MCF 10A (cell line): ENCODE measurements at regions of chr17 and their contacts with region 1.

Region 1: GRCh38 chr17:7351665-7352501 is at the start of gene KCTD11:
- DNase-seq: peak; percentile 89
- H3K4me3 Mint-ChIP-seq: peak within 1 kb of the TSS; percentile 85
- H3K27ac Mint-ChIP-seq: peak within 1 kb of the TSS; percentile 93
- H3K4me1 Mint-ChIP-seq: peaks cover 17% of the 10 kb centered on the region
- H3K27me3 Mint-ChIP-seq: no peaks in the 10 kb centered on the region
- CTCF ChIP-seq: no peak
- total RNA-seq, gene KCTD11: 9.2 and 10.1 TPM in 2 replicates

Region 2: GRCh38 chr17:7306911-7307686 is 44.8 kb before region 1 on chr17 and contains the start of gene EIF5A:
- CTCF ChIA-PET with region 1: interaction called, 6 read pairs
- POLR2A ChIA-PET with region 1: interaction called, 13 read pairs
- intact Hi-C with region 1: no loop called
- DNase-seq: peak; percentile 100
- H3K4me3 Mint-ChIP-seq: peak within 1 kb of the TSS; percentile 88
- H3K27ac Mint-ChIP-seq: peak within 1 kb of the TSS; percentile 90
- H3K4me1 Mint-ChIP-seq: peaks cover 24% of the 10 kb centered on the region
- H3K27me3 Mint-ChIP-seq: no peaks in the 10 kb centered on the region
- CTCF ChIP-seq: no peak
- total RNA-seq, gene EIF5A: 1,142 and 1,190 TPM in 2 replicates

Region 3: DNA sequence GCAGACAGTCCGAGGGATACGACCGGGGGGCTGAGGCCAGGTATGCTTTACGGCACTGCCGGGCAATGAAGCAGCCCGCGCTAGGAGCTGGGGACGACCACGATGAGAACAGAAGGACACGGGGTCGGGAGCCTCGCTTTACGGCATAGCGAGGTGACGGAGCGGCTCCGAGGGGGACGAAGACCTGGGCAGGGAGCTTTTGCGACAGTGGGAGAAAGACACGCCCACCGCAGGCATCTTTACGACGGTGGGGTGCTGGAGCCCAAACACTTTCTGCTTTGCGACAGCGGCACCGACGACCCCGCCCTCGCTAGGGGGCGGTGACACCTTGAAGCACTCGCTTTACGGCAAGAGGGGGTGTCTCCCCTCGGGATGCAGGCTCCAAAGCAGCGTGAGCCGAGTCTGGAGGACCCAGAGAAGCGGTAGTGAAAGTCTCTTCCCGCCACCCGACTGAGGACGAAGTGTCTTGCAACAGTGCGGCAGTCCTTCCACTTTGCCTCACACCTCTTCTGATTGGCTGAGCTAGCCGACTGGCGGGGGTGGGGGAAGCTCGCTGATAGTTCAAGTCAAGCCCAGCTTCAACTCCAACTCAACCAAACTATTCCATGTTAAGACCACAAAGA is 22.4 kb before region 1 on chr17:
- CTCF ChIA-PET with region 1: interaction called, 3 read pairs
- POLR2A ChIA-PET with region 1: interaction called, 54 read pairs
- intact Hi-C with region 1: no loop called
- DNase-seq: peak; percentile 98
- H3K4me3 Mint-ChIP-seq: peak overlapping the region; percentile 99
- H3K27ac Mint-ChIP-seq: peak overlapping the region; percentile 96
- H3K4me1 Mint-ChIP-seq: peaks cover 15% of the 10 kb centered on the region
- H3K27me3 Mint-ChIP-seq: no peaks in the 10 kb centered on the region
- CTCF ChIP-seq: no peak

Region 4: GRCh38 chr17:7380321-7380720 is 28.4 kb after region 1 on chr17:
- CTCF ChIA-PET with region 1: interaction called, 5 read pairs
- POLR2A ChIA-PET with region 1: interaction called, 13 read pairs
- intact Hi-C with region 1: loop called (anchors 2 kb)
- DNase-seq: peak; percentile 24
- H3K4me3 Mint-ChIP-seq: peak overlapping the region; percentile 94
- H3K27ac Mint-ChIP-seq: peak overlapping the region; percentile 90
- H3K4me1 Mint-ChIP-seq: peaks cover 13% of the 10 kb centered on the region
- H3K27me3 Mint-ChIP-seq: no peaks in the 10 kb centered on the region
- CTCF ChIP-seq: no peak

Region 5: DNA sequence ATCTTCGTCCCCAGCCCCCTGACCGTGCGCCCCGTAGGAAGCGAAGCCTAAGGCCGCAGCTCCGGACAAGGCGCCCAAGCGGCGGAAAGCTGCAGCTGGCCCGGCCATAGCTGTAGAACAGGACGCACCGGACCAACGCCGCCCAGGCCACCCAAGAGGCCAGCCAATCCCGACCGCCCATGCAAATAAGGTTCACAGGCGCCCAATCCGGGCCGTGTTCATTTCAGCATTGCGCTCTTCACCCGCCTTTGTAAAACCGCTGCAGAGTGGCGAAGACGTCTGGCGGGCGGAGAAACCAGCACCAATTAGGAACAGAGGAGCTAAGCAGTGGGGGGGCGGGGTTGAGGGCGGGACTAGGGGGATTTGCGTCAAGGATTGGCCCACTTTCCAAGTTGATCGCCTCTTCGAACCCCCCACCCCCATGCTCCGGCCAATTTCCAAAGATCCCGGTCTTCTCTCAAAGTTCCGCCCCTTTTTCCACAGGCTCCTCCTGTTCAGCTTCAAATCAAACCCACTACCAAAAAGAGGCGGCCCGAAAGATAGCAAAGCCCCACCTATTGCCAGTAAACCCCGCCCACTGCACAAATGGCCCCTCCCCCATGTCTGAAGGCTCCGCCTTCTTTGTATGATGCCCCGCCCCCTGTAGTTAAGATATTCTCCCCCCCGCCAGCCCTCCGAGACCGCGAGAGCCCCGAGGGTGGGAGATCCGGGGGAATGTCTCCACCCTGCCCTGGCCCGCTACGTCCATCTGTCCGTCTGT is 52.3 kb after region 1 on chr17 and contains the start of gene TMEM256:
- CTCF ChIA-PET with region 1: interaction called, 12 read pairs
- POLR2A ChIA-PET with region 1: interaction called, 24 read pairs
- intact Hi-C with region 1: loop called (anchors 2 kb)
- DNase-seq: peak; percentile 99
- H3K4me3 Mint-ChIP-seq: peak within 1 kb of the TSS; percentile 78
- H3K27ac Mint-ChIP-seq: peak within 1 kb of the TSS; percentile 86
- H3K4me1 Mint-ChIP-seq: peaks cover 16% of the 10 kb centered on the region
- H3K27me3 Mint-ChIP-seq: no peaks in the 10 kb centered on the region
- CTCF ChIP-seq: no peak
- total RNA-seq, gene TMEM256: 35.2 and 42.9 TPM in 2 replicates

Region 6: DNA sequence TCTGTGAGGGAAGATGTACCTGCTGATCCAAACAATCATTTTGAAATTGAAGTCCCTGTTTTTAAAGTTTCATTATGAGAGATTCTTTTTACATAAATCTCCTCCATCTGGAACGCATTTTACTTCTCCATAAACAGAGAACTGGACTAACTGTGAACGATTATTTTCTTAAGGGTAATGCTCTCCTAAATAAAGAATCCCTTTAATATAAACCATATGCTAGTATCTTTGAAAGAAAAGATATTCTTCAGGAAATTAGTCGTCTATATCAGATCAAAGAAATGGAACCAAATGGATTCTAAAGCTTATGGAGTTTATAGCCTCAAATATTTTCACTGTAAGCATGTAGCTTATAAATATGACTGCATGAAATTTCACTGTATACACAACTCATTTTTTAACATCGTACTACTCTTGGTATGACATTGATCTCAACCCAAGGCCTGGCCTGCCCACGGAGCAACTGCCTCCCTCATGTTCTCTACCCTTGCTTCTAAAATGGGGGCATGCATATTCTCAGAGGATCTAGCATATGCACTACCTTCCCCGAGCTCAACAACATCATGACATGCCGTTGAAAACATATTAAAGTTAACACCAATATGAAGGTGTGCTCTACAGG is 1212.2 kb after region 1 on chr17:
- CTCF ChIA-PET with region 1: no interaction called
- POLR2A ChIA-PET with region 1: no interaction called
- intact Hi-C with region 1: no loop called
- DNase-seq: no peak
- H3K4me3 Mint-ChIP-seq: no peak overlapping the region
- H3K27ac Mint-ChIP-seq: no peak overlapping the region
- H3K4me1 Mint-ChIP-seq: no peaks in the 10 kb centered on the region
- H3K27me3 Mint-ChIP-seq: no peaks in the 10 kb centered on the region
- CTCF ChIP-seq: no peak